G401 (cell line): ENCODE measurements at regions of chr2 and their contacts with region 1.

Region 1: GRCh38 chr2:63432373-63432772 is 155.9 kb downstream of the WDPCP start:
- DNase-seq: no peak

Region 2: DNA sequence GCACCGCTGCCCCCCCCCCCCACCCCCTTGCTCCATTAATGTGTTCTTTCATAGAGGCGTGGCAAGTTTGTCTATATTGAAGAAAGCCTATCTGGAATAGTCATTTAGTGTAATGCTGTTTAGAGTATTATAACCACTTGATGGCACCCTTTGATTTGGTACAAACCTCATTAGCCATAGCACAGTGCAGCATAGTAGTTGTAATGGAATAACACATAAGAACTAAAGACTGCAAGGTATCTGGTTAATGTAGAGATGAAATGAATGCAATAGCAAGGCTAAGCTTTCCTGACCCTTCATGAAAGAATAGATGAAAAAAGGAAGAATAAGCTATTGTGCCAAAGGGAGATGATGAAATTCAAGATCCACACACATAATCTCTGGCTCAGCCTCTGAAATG is 645.0 kb before region 1 on chr2:
- in situ Hi-C with region 1: loop called (anchors 10 kb)
- DNase-seq: peak; percentile 71